Activated CD4-positive, alpha-beta memory T cell treated with anti-CD3 and anti-CD28 coated beads, Interleukin-2, amount 10 ng/mL, durations not matched to agents 7 days and 5 days (primary cell): ENCODE measurements at regions of chr3 and their contacts with region 1.

Region 1: DNA sequence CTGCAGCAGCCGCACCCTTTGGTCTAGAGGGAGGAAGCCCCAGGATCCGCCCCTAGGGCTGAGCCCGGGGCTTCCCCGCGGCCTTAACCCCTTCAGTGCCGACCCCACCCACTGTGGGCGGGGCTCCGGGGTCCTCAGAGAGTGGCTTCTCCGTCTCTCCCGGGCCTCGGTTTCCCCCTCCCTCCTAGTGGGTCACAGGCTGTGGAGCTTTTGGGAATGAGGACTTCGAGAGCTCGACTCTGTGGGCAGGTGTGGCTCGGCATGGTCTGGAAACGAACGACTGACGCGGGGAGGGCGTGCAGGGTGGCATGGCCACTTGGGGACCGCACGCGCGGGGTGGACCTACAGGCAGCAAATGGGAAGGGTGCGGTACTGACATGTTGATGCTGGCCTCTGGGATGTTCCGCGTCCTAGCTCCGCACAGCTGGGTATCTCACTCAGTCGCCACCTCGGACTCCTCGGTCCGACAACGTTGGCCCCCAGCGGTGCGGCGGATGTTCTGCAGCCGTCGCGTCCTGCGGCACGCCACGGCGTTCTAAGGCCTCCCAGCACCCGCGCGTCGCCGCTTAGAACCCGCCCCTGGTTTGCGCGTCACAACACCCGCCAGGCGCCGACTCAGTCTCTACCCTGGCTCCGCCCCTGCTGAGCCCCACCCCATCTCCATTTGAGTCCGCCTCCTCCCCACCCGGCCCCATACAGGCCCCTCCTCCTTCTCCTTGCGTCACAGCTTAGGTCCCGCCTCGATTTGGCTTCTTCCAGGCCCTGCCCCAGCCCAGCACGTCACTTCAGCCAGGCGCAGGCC is at the starts of genes HYAL3 and NAA80:
- DNase-seq: peak; percentile 100
- H3K4me3 Mint-ChIP-seq: peak within 1 kb of the TSS; percentile 99
- H3K27ac Mint-ChIP-seq: peak within 1 kb of the TSS; percentile 100
- H3K4me1 Mint-ChIP-seq: peaks cover 36% of the 10 kb centered on the region
- H3K27me3 Mint-ChIP-seq: no peaks in the 10 kb centered on the region
- total RNA-seq, gene HYAL3: 13.2 to 13.9 TPM
- total RNA-seq, gene NAA80: 41.5 to 49.4 TPM

Region 2: GRCh38 chr3:50184242-50184978 is 114.6 kb before region 1 on chr3:
- CTCF ChIA-PET with region 1: no interaction called
- POLR2A ChIA-PET with region 1: no interaction called
- DNase-seq: no peak
- H3K4me3 Mint-ChIP-seq: no peak overlapping the region
- H3K27ac Mint-ChIP-seq: no peak overlapping the region
- H3K4me1 Mint-ChIP-seq: no peaks in the 10 kb centered on the region
- H3K27me3 Mint-ChIP-seq: peaks cover 3% of the 10 kb centered on the region

Region 3: GRCh38 chr3:50235716-50236496 is 63.1 kb before region 1 on chr3 and contains the start of gene GNAI2:
- CTCF ChIA-PET with region 1: interaction called, 3 read pairs
- POLR2A ChIA-PET with region 1: interaction called, 14 read pairs
- DNase-seq: peak; percentile 99
- H3K4me3 Mint-ChIP-seq: peak within 1 kb of the TSS; percentile 99
- H3K27ac Mint-ChIP-seq: peak within 1 kb of the TSS; percentile 98
- H3K4me1 Mint-ChIP-seq: peaks cover 42% of the 10 kb centered on the region
- H3K27me3 Mint-ChIP-seq: no peaks in the 10 kb centered on the region
- total RNA-seq, gene GNAI2: 493 to 519 TPM

Region 4: GRCh38 chr3:50245831-50246516 is 53.1 kb before region 1 on chr3:
- CTCF ChIA-PET with region 1: interaction called, 17 read pairs
- POLR2A ChIA-PET with region 1: interaction called, 7 read pairs
- DNase-seq: peak; percentile 94
- H3K4me3 Mint-ChIP-seq: peak overlapping the region; percentile 78
- H3K27ac Mint-ChIP-seq: peak overlapping the region; percentile 94
- H3K4me1 Mint-ChIP-seq: peaks cover 91% of the 10 kb centered on the region
- H3K27me3 Mint-ChIP-seq: no peaks in the 10 kb centered on the region

Region 5: GRCh38 chr3:50264370-50264963 is 34.6 kb before region 1 on chr3:
- CTCF ChIA-PET with region 1: no interaction called
- POLR2A ChIA-PET with region 1: no interaction called
- DNase-seq: no peak
- H3K4me3 Mint-ChIP-seq: no peak overlapping the region
- H3K27ac Mint-ChIP-seq: no peak overlapping the region
- H3K4me1 Mint-ChIP-seq: peaks cover 7% of the 10 kb centered on the region
- H3K27me3 Mint-ChIP-seq: peaks cover 21% of the 10 kb centered on the region

Region 6: DNA sequence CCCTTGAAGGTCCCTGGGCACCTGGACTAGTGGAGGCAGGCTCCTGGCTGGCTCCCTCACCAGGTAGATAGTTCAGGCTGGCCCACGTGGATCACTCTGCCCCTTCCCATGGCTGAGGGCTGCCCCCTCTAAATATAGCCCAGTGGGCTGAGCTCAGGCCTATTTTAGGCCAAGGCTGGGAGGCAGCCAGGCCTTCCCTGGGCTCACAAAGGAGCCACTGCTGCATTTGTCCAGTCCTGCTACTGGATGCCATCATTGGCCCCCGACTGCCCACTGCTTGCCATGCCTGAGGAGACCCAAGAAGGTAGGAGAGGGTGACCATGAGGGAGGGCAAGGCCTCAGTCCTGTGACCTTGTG is 20.2 kb before region 1 on chr3 and contains the start of gene LSMEM2:
- CTCF ChIA-PET with region 1: interaction called, 6 read pairs
- POLR2A ChIA-PET with region 1: interaction called, 12 read pairs
- DNase-seq: no peak
- H3K4me3 Mint-ChIP-seq: no peak within 1 kb of the TSS
- H3K27ac Mint-ChIP-seq: no peak within 1 kb of the TSS
- H3K4me1 Mint-ChIP-seq: peaks cover 19% of the 10 kb centered on the region
- H3K27me3 Mint-ChIP-seq: peaks cover 39% of the 10 kb centered on the region
- total RNA-seq, gene LSMEM2: not detected

Region 7: GRCh38 chr3:50321336-50322114 is 22.5 kb after region 1 on chr3:
- CTCF ChIA-PET with region 1: interaction called, 82 read pairs
- POLR2A ChIA-PET with region 1: interaction called, 113 read pairs
- DNase-seq: peak; percentile 85
- H3K4me3 Mint-ChIP-seq: peak overlapping the region; percentile 72
- H3K27ac Mint-ChIP-seq: peak overlapping the region; percentile 83
- H3K4me1 Mint-ChIP-seq: peaks cover 48% of the 10 kb centered on the region
- H3K27me3 Mint-ChIP-seq: no peaks in the 10 kb centered on the region

Region 8: DNA sequence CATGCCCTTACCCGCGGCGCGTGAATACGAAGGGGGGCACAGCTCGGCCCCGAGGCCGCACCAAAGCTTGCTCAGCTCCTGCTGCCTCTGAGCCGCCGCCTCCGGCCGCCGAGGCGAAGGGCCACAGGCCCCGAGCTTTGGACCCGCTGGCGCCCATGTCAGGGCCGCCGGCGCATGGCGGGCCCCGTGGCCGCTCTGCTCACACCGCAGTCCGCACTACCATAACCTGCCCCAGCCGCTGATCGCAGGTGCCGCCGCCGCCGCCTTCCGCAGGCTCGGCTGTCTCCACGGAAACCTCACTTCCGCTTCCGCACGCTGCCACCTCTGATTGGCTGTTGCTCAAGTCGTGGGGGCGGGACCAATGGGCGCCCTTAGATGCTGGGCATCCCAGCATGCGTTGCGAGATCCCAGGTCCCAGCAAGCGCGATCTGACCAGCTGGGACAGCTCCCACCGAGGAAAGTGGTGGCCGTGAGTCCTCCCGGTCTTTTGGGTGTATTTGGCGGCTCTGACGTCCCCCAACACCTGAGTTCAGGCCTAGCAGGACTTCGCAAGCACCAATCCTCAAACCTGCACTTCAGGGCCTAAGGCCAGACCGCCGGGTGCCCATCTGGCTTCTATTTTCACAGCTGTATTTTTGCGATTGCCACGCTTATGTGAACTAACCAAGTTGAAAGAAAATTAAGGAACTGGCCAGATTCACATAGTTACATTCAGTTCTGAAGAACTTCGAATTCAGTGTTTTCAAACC is 29.1 kb after region 1 on chr3 and contains the start of gene TUSC2:
- CTCF ChIA-PET with region 1: interaction called, 82 read pairs
- POLR2A ChIA-PET with region 1: interaction called, 150 read pairs
- DNase-seq: peak; percentile 97
- H3K4me3 Mint-ChIP-seq: peak within 1 kb of the TSS; percentile 93
- H3K27ac Mint-ChIP-seq: peak within 1 kb of the TSS; percentile 79
- H3K4me1 Mint-ChIP-seq: peaks cover 46% of the 10 kb centered on the region
- H3K27me3 Mint-ChIP-seq: no peaks in the 10 kb centered on the region
- total RNA-seq, gene TUSC2: 16.8 to 17.9 TPM

Region 9: DNA sequence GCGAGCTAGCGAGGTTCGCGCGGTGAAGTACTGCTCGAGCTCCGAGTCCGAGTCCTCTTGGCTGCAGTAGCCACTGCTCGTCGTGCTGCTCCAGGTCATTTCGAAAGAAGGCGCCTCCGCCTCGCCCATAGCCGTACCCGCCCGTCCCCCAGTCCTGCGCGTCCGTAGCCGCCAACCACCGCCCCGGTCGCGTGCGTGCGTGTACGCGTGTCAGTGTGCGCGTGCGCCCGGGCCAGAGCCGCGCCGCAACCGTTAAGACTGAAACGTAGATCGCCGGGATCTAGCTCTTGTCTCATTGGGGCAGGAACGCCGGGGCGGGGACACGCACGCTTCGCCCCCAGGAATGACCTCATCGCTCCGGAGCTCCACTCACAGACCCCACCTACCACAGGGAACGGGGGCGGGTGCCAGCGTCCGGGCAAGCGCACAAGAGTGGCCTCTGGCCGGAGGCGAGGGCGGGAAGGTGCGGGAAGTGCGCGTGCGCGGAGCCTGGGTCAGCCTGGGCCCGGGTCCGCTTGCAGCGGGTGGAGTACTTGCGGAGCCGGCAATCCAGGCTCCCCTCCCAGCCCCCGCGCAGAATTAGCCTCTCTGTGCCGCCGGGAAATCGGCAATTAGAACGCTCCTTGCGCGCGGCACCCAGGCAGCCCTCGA is 38.3 kb after region 1 on chr3:
- CTCF ChIA-PET with region 1: interaction called, 15 read pairs
- POLR2A ChIA-PET with region 1: interaction called, 150 read pairs
- DNase-seq: peak; percentile 97
- H3K4me3 Mint-ChIP-seq: peak overlapping the region; percentile 85
- H3K27ac Mint-ChIP-seq: peak overlapping the region; percentile 94
- H3K4me1 Mint-ChIP-seq: peaks cover 63% of the 10 kb centered on the region
- H3K27me3 Mint-ChIP-seq: no peaks in the 10 kb centered on the region

Region 10: GRCh38 chr3:50509715-50510114 is 210.7 kb after region 1 on chr3:
- CTCF ChIA-PET with region 1: no interaction called
- POLR2A ChIA-PET with region 1: no interaction called
- DNase-seq: no peak
- H3K4me3 Mint-ChIP-seq: no peak overlapping the region
- H3K27ac Mint-ChIP-seq: no peak overlapping the region
- H3K4me1 Mint-ChIP-seq: no peaks in the 10 kb centered on the region
- H3K27me3 Mint-ChIP-seq: peaks cover 18% of the 10 kb centered on the region